Heart left ventricle (tissue), 16 donors: ENCODE measurements at regions of chr17 and their contacts with region 1.

Region 1: GRCh38 chr17:70313057-70313852 is 143.9 kb downstream of the KCNJ2 start:
- DNase-seq: no peak
- ATAC-seq: no peak
- H3K4me3 ChIP-seq: no peak overlapping the region
- H3K27ac ChIP-seq: peak overlapping the region in 1 of 12 donors; percentile 81
- H3K4me1 ChIP-seq: peaks cover 0 to 27% (median 5%) of the 10 kb centered on the region in 12 donors
- H3K27me3 ChIP-seq: no peaks in the 10 kb centered on the region
- CTCF ChIP-seq: no peak
- POLR2A ChIP-seq: no peak

Region 2: DNA sequence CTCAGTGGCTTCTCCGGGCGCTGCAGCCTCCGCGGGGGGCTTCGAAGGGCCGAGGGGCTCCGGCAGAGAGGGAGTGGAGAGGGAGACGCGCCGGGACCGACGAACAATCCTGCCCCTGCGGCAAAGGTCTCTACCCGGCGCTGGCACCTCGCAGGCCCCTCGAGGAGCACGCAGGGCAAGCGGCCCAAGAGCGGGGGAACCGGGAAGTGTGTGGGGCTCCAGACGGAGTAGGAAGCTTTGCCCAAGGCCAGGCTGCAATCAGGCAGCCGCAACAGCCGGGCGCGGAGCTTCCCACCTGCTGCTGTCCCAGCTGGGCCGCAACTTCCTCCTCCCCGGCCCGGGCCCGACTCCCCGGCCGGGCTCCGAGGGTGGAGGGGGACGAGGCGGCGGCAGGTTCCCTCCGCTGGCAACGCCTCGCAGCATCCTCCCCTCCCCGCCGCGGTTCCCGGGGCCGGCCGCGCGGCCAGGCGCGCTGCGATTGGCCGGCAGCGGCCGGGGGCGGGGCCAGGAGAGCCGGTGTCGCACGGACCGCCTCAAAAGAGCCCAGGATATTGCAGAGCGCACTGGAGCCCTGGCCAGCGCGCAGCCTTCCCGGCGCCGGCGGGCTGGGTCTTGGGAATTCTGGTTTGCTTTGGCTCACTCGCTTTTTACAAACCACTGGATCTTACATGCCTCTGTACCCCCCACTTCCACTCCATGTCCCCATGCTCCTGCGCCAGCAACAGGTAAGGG is 144.1 kb before region 1 on chr17 and contains the start of gene KCNJ2:
- intact Hi-C with region 1: loop called in 6 of 10 experiments (anchors 5 to 10 kb)
- DNase-seq: peak; percentile 92 to 94 (median 94)
- ATAC-seq: peak; percentile 83 to 97 (median 91)
- H3K4me3 ChIP-seq: peak within 1 kb of the TSS; percentile 62 to 87 (median 77)
- H3K27ac ChIP-seq: peak within 1 kb of the TSS; percentile 87 to 98 (median 94)
- H3K4me1 ChIP-seq: peaks cover 0 to 38% (median 4%) of the 10 kb centered on the region in 12 donors
- H3K27me3 ChIP-seq: no peaks in the 10 kb centered on the region
- CTCF ChIP-seq: peak in 1 of 12 donors; percentile 3
- POLR2A ChIP-seq: peak; percentile 61 to 99
- total RNA-seq, gene KCNJ2: 28.8 to 60.7 (median 48.8) TPM

Region 3: DNA sequence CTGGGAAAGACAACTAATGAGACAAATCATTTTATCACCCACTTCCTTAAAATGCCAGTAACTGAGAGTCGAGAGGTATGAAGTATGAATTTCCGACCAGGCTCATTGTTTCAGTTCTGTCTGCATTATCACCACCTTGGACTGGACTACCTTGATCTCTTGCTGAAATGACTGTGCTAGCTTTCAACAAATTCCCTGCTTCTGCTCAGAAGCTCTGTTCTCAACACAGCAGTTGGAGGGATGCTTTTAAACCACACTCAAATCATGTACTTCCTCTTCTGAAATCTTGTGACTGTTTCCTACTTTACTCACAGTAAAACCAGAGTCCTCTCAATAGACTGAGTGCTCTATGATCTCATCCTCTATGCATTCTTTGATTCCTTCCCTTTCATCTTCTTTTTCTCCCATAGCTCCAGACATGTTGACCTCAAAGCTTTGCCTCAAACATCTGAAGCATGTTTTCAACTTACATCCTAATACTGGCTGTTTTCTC is 51.9 kb after region 1 on chr17:
- intact Hi-C with region 1: loop called in 1 of 10 experiments (anchors 10 kb)
- DNase-seq: no peak
- ATAC-seq: peak in 1 of 4 donors; percentile 51
- H3K4me3 ChIP-seq: no peak overlapping the region
- H3K27ac ChIP-seq: peak overlapping the region in 1 of 12 donors; percentile 59
- H3K4me1 ChIP-seq: peaks cover 0 to 6% (median 0%) of the 10 kb centered on the region in 12 donors
- H3K27me3 ChIP-seq: no peaks in the 10 kb centered on the region
- CTCF ChIP-seq: no peak
- POLR2A ChIP-seq: no peak

Region 4: DNA sequence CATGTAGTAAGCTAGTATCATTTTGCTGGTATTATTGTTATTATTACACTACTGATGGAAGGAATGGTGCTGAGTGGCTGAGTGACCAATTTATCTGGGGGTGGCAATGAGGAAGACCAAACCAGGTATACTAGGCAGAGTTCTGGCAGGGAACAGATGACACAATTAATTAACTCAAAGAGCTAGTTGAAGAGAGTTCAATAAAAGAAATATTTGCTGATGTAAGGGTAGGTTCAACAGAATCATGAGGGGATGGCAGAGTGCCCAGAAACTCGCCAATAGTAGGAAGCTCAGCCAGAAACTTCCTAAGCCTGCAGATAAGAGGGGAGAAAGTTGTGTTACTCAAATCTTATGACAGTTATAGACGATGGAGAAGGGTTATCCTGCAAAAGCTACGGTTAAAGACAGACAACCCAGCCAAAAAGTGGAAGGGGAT is 208.6 kb after region 1 on chr17:
- intact Hi-C with region 1: loop called in 3 of 10 experiments (anchors 5 to 10 kb)
- DNase-seq: peak in 4 of 5 donors; percentile 64 to 79 (median 70)
- ATAC-seq: peak; percentile 52 to 92 (median 87)
- H3K4me3 ChIP-seq: peak overlapping the region in 1 of 12 donors; percentile 3
- H3K27ac ChIP-seq: peak overlapping the region in 9 of 12 donors; percentile 14 to 80 (median 53)
- H3K4me1 ChIP-seq: peaks cover 0 to 27% (median 8%) of the 10 kb centered on the region in 12 donors
- H3K27me3 ChIP-seq: no peaks in the 10 kb centered on the region
- CTCF ChIP-seq: no peak
- POLR2A ChIP-seq: no peak